CD8-positive, alpha-beta memory T cell (primary cell): ENCODE measurements at regions of chr7 and their contacts with region 1.

Region 1: GRCh38 chr7:99990460-99990852 is 14.6 kb upstream of the AZGP1 start:
- DNase-seq: no peak
- H3K4me3 ChIP-seq: no peak overlapping the region
- H3K4me3 Mint-ChIP-seq: no peak overlapping the region
- H3K27ac ChIP-seq: no peak overlapping the region
- H3K27ac Mint-ChIP-seq: peak overlapping the region in 1 of 8 donors; percentile 55
- H3K4me1 ChIP-seq: no peaks in the 10 kb centered on the region
- H3K4me1 Mint-ChIP-seq: peaks cover 0 to 6% (median 0%) of the 10 kb centered on the region in 3 donors
- H3K27me3 ChIP-seq: no peaks in the 10 kb centered on the region
- H3K27me3 Mint-ChIP-seq: peaks cover 19 to 28% of the 10 kb centered on the region in 2 donors

Region 2: DNA sequence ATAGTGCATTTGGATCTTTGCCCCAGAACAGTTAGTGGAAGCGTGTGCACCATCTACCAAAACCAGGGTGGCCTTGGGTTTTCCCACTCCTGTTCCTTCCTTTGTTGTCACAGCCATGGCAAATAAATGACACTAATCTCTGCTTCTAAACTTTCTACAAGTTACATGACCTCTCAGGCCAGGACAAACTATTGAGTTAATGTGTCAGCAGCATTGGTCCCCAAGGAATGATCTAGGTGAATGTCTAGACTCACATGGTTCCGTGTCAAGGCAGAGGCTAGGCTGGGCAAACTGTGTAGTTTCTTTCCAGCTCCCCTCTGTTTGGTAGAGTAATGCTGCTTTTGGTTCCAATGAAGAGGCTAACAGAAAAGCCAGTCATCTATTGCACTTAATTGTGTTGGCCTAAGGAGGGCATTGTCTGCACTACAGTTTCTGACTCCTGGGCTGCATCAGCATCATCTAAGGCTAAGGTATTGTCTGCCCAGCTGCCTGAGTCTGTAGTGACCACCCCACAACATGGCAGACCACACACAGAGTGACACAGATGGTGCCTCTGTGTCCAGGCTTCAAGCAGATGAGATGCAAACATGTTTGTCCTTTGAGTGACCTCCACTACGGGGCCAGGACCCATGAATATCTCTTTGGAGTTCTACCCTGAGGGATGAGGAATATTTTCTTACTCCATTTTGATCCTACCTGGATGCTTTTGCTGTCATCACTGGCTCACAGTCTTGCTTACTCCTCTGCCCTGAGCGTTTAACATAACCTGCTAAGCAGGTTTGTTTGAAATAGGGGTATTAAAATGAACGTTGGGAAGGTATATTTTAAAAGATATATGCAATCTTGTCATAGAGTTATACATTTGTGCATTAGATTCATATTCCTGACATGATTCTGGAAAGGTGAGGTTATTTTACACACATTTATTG is 208.2 kb before region 1 on chr7:
- CTCF ChIA-PET with region 1: no interaction called
- POLR2A ChIA-PET with region 1: no interaction called
- DNase-seq: no peak
- H3K4me3 ChIP-seq: no peak overlapping the region
- H3K4me3 Mint-ChIP-seq: no peak overlapping the region
- H3K27ac ChIP-seq: no peak overlapping the region
- H3K27ac Mint-ChIP-seq: no peak overlapping the region
- H3K4me1 ChIP-seq: no peaks in the 10 kb centered on the region
- H3K4me1 Mint-ChIP-seq: no peaks in the 10 kb centered on the region
- H3K27me3 ChIP-seq: no peaks in the 10 kb centered on the region
- H3K27me3 Mint-ChIP-seq: peaks cover 17 to 50% of the 10 kb centered on the region in 2 donors

Region 3: DNA sequence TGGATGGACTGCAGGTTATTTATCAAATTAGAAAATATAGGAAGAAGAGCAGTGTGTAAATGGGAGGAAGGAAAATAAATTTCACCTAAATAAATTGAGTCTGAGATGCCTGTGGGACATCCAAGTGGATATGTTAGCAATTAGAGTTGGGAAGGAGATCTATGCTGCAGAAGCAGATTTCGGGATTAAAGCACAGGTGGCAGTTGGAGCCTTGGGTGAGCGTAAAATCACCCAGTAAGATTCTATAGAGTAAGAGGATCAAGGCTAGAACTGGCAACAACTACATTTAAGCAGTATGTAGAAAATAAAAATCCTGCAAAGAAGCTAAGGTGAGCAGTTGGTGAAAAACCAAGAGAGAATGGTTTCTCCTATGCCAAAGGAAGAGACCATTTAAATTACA is 79.5 kb before region 1 on chr7:
- CTCF ChIA-PET with region 1: interaction called, 51 read pairs
- POLR2A ChIA-PET with region 1: no interaction called
- DNase-seq: no peak
- H3K4me3 ChIP-seq: no peak overlapping the region
- H3K4me3 Mint-ChIP-seq: no peak overlapping the region
- H3K27ac ChIP-seq: no peak overlapping the region
- H3K27ac Mint-ChIP-seq: peak overlapping the region in 1 of 8 donors; percentile 8
- H3K4me1 ChIP-seq: peaks cover 25% of the 10 kb centered on the region
- H3K4me1 Mint-ChIP-seq: peaks cover 45 to 78% (median 67%) of the 10 kb centered on the region in 3 donors
- H3K27me3 ChIP-seq: no peaks in the 10 kb centered on the region
- H3K27me3 Mint-ChIP-seq: no peaks in the 10 kb centered on the region

Region 4: DNA sequence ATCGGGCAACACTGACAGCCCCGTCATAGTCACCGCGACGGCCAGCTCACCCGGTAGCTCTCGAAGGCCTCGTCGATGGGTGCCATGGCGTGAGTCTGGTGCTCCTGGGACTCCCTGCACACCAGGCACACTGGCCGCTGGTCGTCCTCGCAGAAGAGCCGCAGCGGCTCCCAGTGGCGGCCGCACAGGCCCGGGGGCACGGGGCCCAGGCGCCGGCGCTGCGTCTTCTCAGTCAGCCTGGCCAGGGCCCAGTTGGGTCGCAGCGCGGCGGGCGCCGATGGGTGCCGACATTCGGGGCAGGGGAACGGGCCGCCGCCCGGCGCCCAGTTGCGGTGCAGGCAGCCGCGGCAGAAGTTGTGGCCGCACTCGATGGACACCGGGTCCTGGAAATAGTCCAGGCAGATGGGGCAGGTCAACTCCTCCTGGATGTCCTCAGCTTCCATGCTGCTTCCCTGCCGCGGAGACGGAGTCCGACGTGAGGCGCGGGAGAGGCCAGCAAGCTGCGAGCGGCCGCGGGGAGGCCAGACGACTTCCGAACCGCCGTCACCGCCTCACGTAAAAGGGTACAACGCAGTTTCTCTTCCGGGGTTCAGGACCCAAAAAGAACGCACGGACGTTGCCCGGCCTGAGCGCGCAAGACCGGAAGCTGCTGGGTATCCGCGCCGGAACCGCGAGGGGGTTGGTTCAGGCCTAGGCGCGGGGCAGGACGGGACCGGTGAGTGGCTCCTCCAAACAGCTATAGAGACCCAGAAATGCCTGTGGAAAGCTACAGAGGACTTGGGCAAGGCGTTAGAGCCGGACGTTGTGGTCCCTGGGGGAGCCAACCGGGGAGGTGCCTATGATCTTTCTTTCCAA is 71.3 kb before region 1 on chr7 and contains the start of gene TRIM4:
- CTCF ChIA-PET with region 1: interaction called, 51 read pairs
- POLR2A ChIA-PET with region 1: interaction called, 18 read pairs
- DNase-seq: peak; percentile 78 to 92 (median 88)
- H3K4me3 ChIP-seq: peak within 1 kb of the TSS; percentile 97
- H3K4me3 Mint-ChIP-seq: peak within 1 kb of the TSS; percentile 92 to 98 (median 96)
- H3K27ac ChIP-seq: peak within 1 kb of the TSS; percentile 94
- H3K27ac Mint-ChIP-seq: peak within 1 kb of the TSS; percentile 93 to 99 (median 98)
- H3K4me1 ChIP-seq: peaks cover 48% of the 10 kb centered on the region
- H3K4me1 Mint-ChIP-seq: peaks cover 47 to 59% (median 57%) of the 10 kb centered on the region in 3 donors
- H3K27me3 ChIP-seq: no peaks in the 10 kb centered on the region
- H3K27me3 Mint-ChIP-seq: peaks cover 0 to 6% of the 10 kb centered on the region in 2 donors
- total RNA-seq, gene TRIM4: 30.0 to 31.0 TPM

Region 5: GRCh38 chr7:100003711-100004661 is 13.5 kb after region 1 on chr7:
- CTCF ChIA-PET with region 1: interaction called, 14 read pairs
- POLR2A ChIA-PET with region 1: no interaction called
- DNase-seq: no peak
- H3K4me3 ChIP-seq: no peak overlapping the region
- H3K4me3 Mint-ChIP-seq: no peak overlapping the region
- H3K27ac ChIP-seq: no peak overlapping the region
- H3K27ac Mint-ChIP-seq: peak overlapping the region in 1 of 8 donors; percentile 50
- H3K4me1 ChIP-seq: no peaks in the 10 kb centered on the region
- H3K4me1 Mint-ChIP-seq: no peaks in the 10 kb centered on the region
- H3K27me3 ChIP-seq: no peaks in the 10 kb centered on the region
- H3K27me3 Mint-ChIP-seq: peaks cover 2 to 8% of the 10 kb centered on the region in 2 donors

Region 6: GRCh38 chr7:100029596-100029995 is 39.1 kb after region 1 on chr7:
- CTCF ChIA-PET with region 1: no interaction called
- POLR2A ChIA-PET with region 1: no interaction called
- DNase-seq: no peak
- H3K4me3 ChIP-seq: no peak overlapping the region
- H3K4me3 Mint-ChIP-seq: peak overlapping the region in 1 of 7 donors; percentile 40
- H3K27ac ChIP-seq: no peak overlapping the region
- H3K27ac Mint-ChIP-seq: peak overlapping the region in 1 of 8 donors; percentile 27
- H3K4me1 ChIP-seq: no peaks in the 10 kb centered on the region
- H3K4me1 Mint-ChIP-seq: no peaks in the 10 kb centered on the region
- H3K27me3 ChIP-seq: no peaks in the 10 kb centered on the region
- H3K27me3 Mint-ChIP-seq: no peaks in the 10 kb centered on the region